ENCODE measurements at regions of chr1 and their contacts with region 1.

Region 1: DNA sequence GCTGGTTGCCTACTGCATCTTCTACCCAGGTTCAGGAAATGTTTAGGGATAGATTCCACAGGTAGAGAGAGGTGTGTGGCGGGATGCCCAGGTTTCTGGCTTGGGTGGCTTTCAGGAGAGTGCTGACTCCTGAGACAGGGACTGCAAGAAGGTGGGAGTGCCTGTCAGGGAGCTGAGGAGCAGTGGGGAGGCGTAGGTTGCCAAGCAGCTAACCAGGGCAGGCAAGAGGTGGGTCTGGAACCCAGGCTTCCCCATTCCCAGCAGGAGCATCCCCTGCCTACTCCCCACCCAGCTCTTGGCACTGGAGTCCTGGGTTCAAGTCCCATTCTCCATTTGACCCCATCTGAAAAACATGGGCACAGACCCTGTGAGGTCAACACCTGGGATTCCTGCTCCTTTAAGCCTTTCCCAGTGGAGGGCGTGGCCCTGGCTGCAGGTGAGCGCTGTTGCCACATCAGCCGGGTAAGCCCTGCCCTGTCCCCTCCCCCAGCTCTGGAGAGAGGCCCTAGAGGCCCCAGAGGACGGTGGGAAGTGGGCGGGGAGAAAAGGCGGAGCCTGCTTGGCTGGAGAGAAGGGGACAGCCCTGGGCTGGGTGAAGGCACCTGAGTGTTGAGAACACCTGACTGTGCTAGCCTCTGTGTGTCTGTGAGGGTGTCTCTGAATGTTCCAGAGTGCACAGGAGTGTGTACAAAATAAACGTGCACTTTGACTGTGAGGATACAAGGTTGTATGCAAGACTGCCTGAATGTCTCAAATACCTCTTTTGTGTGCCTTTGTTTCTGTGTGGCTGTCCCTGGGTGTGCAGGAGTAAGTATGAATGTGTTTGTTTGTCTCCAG is 14.0 kb upstream of the SYNC start:
- DNase-seq: peak; percentile 42 to 68
- ATAC-seq: peak; percentile 48 to 71 (median 56)
- H3K4me3 ChIP-seq: no peak overlapping the region
- H3K27ac ChIP-seq: no peak overlapping the region
- H3K4me1 ChIP-seq: no peaks in the 10 kb centered on the region
- H3K27me3 ChIP-seq: no peaks in the 10 kb centered on the region
- CTCF ChIP-seq: no peak

Region 2: GRCh38 chr1:32753532-32754312 is 37.2 kb after region 1 on chr1:
- intact Hi-C with region 1: loop called in 1 of 2 experiments (anchors 5 kb)
- DNase-seq: peak; percentile 70 to 81
- ATAC-seq: peak; percentile 89 to 97 (median 96)
- H3K4me3 ChIP-seq: peak overlapping the region; percentile 73
- H3K27ac ChIP-seq: no peak overlapping the region
- H3K4me1 ChIP-seq: peaks cover 5% of the 10 kb centered on the region
- H3K27me3 ChIP-seq: no peaks in the 10 kb centered on the region
- CTCF ChIP-seq: no peak

Region 3: DNA sequence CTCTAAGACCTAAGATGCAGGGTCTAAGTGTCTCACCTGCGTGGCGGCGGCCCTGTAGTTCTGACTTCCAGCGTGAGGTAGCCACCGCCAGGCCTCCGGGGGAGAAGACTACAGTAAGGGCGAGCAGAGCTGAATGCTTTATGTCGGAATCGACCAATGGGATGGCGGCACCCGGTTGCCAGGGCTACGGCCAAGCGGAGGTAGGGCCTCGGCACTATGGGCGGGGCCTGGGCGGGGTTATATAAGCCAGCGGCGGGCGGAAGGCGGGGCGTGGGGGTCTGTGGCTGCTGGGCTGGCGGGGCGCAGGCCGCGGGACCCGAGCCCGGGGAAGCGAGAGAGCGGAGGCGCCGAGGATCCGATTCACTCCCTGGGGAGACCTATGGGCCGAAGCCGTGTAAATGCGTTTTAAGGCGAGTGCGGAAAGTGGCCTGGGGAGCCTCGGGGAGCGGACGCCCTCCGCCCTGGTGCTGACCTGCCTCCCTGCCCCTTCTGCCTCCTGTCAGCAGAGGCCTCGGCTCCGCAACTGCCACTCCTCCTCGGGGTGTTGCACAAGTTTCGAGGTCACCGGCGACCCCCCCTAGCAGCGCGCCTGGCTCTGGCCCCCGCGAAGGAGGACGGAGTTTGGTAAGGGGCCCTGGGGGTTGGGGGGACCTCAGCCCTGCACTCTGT is 364.5 kb after region 1 on chr1 and contains the start of gene AZIN2:
- intact Hi-C with region 1: loop called in 1 of 2 experiments (anchors 5 kb)
- DNase-seq: peak; percentile 96 to 98
- ATAC-seq: peak; percentile 97 to 100 (median 99)
- H3K4me3 ChIP-seq: peak within 1 kb of the TSS; percentile 80
- H3K27ac ChIP-seq: peak within 1 kb of the TSS; percentile 39
- H3K4me1 ChIP-seq: peaks cover 6% of the 10 kb centered on the region
- H3K27me3 ChIP-seq: no peaks in the 10 kb centered on the region
- CTCF ChIP-seq: no peak
- total RNA-seq, gene AZIN2: 0.17 to 3.5 (median 1.1) TPM

Measured in psoas muscle (tissue), 8 donors.